B cell (primary cell): ENCODE measurements at regions of chr6 and their contacts with region 1.

Region 1: GRCh38 chr6:142702501-142703460 is 242.2 kb downstream of the HIVEP2 start:
- DNase-seq: peak; percentile 37
- ATAC-seq: peak; percentile 61
- H3K4me3 ChIP-seq: no peak overlapping the region
- H3K4me3 Mint-ChIP-seq: peak overlapping the region; percentile 20
- H3K27ac ChIP-seq: peak overlapping the region in 1 of 2 donors; percentile 22
- H3K27ac Mint-ChIP-seq: peak overlapping the region; percentile 68
- H3K4me1 ChIP-seq: peaks cover 31 to 37% of the 10 kb centered on the region in 2 donors
- H3K4me1 Mint-ChIP-seq: peaks cover 33% of the 10 kb centered on the region
- H3K27me3 ChIP-seq: no peaks in the 10 kb centered on the region
- H3K27me3 Mint-ChIP-seq: no peaks in the 10 kb centered on the region
- CTCF ChIP-seq: no peak

Region 2: GRCh38 chr6:142796571-142796970 is 93.8 kb after region 1 on chr6:
- CTCF ChIA-PET with region 1: no interaction called
- POLR2A ChIA-PET with region 1: no interaction called
- intact Hi-C with region 1: loop called (anchors 10 kb)
- DNase-seq: no peak
- ATAC-seq: no peak
- H3K4me3 ChIP-seq: no peak overlapping the region
- H3K4me3 Mint-ChIP-seq: no peak overlapping the region
- H3K27ac ChIP-seq: no peak overlapping the region
- H3K27ac Mint-ChIP-seq: no peak overlapping the region
- H3K4me1 ChIP-seq: peaks cover 11 to 16% of the 10 kb centered on the region in 2 donors
- H3K4me1 Mint-ChIP-seq: peaks cover 42% of the 10 kb centered on the region
- H3K27me3 ChIP-seq: no peaks in the 10 kb centered on the region
- H3K27me3 Mint-ChIP-seq: no peaks in the 10 kb centered on the region
- CTCF ChIP-seq: no peak